ENCODE measurements at regions of chr19 and their contacts with region 1.

Region 1: DNA sequence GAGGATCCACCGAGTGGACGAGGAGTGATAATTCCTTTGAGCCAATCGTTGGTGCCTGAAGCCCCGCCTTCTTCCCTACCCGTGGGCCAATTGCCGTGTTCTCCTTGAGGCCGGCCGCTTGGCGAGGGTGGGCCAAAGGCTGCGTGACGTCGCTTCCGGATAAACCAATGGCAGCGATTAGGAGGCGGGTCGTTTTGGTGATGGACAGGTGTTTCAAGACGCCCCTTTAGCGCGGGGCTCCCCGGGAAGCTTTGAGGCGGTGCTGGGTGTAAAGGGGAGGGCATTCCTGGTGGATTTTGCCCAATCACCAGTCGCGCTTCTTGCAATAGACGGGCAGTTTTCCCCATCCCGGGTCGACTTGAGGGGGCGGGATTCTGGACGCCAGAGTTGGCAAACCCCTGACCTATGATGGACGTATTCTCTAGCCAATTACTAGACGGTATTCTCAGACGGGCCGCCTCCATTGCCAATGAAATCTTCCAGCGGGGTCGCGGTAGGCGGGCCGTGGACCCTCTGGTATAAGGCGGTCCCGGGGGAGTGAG is 310 bp upstream of the PRMT1 start:
- DNase-seq: peak; percentile 97 to 99 (median 98)
- H3K4me3 ChIP-seq: peak overlapping the region; percentile 69 to 79
- H3K4me3 Mint-ChIP-seq: peak overlapping the region; percentile 95 to 100 (median 99)
- H3K27ac ChIP-seq: peak overlapping the region; percentile 93
- H3K27ac Mint-ChIP-seq: peak overlapping the region; percentile 99 to 100 (median 99)
- H3K4me1 ChIP-seq: peaks cover 48% of the 10 kb centered on the region
- H3K4me1 Mint-ChIP-seq: peaks cover 19 to 54% (median 37%) of the 10 kb centered on the region in 4 donors
- H3K27me3 ChIP-seq: no peaks in the 10 kb centered on the region
- H3K27me3 Mint-ChIP-seq: no peaks in the 10 kb centered on the region

Region 2: GRCh38 chr19:49224856-49225255 is 451.9 kb before region 1 on chr19:
- CTCF ChIA-PET with region 1: interaction called, 8 read pairs
- POLR2A ChIA-PET with region 1: no interaction called
- intact Hi-C with region 1: loop called (anchors 1 kb)
- DNase-seq: no peak
- H3K4me3 ChIP-seq: no peak overlapping the region
- H3K4me3 Mint-ChIP-seq: no peak overlapping the region
- H3K27ac ChIP-seq: no peak overlapping the region
- H3K27ac Mint-ChIP-seq: peak overlapping the region in 1 of 7 donors; percentile 73
- H3K4me1 ChIP-seq: peaks cover 8% of the 10 kb centered on the region
- H3K4me1 Mint-ChIP-seq: peaks cover 4 to 9% (median 5%) of the 10 kb centered on the region in 4 donors
- H3K27me3 ChIP-seq: no peaks in the 10 kb centered on the region
- H3K27me3 Mint-ChIP-seq: peaks cover 6% of the 10 kb centered on the region in 2 donors

Region 3: GRCh38 chr19:49468746-49469447 is 207.9 kb before region 1 on chr19:
- CTCF ChIA-PET with region 1: interaction called, 8 read pairs
- POLR2A ChIA-PET with region 1: interaction called, 17 read pairs
- intact Hi-C with region 1: loop called (anchors 1 kb)
- DNase-seq: peak; percentile 96 to 99 (median 98)
- H3K4me3 ChIP-seq: peak overlapping the region in 1 of 2 donors; percentile 44
- H3K4me3 Mint-ChIP-seq: peak overlapping the region; percentile 67 to 94 (median 80)
- H3K27ac ChIP-seq: peak overlapping the region; percentile 84
- H3K27ac Mint-ChIP-seq: peak overlapping the region; percentile 94 to 100 (median 100)
- H3K4me1 ChIP-seq: peaks cover 71% of the 10 kb centered on the region
- H3K4me1 Mint-ChIP-seq: peaks cover 24 to 61% (median 40%) of the 10 kb centered on the region in 4 donors
- H3K27me3 ChIP-seq: no peaks in the 10 kb centered on the region
- H3K27me3 Mint-ChIP-seq: no peaks in the 10 kb centered on the region

Region 4: DNA sequence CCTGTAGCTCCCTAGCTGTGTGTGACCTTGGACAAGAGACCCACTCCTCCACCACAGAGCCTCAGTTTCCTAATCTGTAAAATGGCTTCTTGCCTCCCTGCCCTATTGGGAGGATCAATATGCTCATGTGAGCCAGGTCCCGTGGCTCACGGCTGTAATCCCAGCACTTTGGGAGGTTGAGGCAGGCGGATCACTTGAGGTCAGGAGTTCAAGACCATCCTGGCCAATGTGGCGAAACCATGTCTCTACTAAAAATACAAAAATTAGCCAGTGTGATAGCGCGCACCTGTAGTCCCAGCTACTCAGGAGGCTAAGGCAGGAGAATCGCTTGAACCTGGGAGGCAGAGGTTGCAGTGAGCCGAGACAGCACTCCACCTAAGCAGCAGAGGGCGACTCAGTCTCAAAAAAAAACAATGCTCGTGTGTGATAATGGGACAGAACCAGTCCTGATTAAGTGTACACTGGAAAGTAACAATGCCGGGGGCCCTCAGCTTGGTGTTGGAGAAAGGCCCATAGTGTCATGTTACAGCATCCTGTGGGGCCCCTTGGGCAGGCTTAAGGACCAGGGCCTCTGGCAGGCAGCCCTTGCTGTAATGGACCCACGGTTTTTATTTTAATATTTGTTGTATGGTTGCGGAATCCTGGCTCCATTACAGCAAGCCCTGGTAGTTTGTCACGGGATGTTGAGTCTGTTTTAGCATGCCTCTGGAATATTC is 173.7 kb before region 1 on chr19:
- CTCF ChIA-PET with region 1: interaction called, 6 read pairs
- POLR2A ChIA-PET with region 1: interaction called, 10 read pairs
- intact Hi-C with region 1: loop called (anchors 1 kb)
- DNase-seq: peak; percentile 65 to 79 (median 74)
- H3K4me3 ChIP-seq: no peak overlapping the region
- H3K4me3 Mint-ChIP-seq: peak overlapping the region; percentile 6 to 100 (median 36)
- H3K27ac ChIP-seq: peak overlapping the region; percentile 95
- H3K27ac Mint-ChIP-seq: peak overlapping the region; percentile 91 to 100 (median 99)
- H3K4me1 ChIP-seq: peaks cover 52% of the 10 kb centered on the region
- H3K4me1 Mint-ChIP-seq: peaks cover 16 to 61% (median 33%) of the 10 kb centered on the region in 4 donors
- H3K27me3 ChIP-seq: no peaks in the 10 kb centered on the region
- H3K27me3 Mint-ChIP-seq: no peaks in the 10 kb centered on the region

Region 5: GRCh38 chr19:49580264-49581006 is 96.3 kb before region 1 on chr19 and contains the start of gene NOSIP:
- CTCF ChIA-PET with region 1: interaction called, 8 read pairs
- POLR2A ChIA-PET with region 1: interaction called, 29 read pairs
- intact Hi-C with region 1: loop called (anchors 1 kb)
- DNase-seq: peak; percentile 94 to 97 (median 95)
- H3K4me3 ChIP-seq: peak within 1 kb of the TSS; percentile 54 to 99
- H3K4me3 Mint-ChIP-seq: peak within 1 kb of the TSS; percentile 90 to 97 (median 94)
- H3K27ac ChIP-seq: peak within 1 kb of the TSS; percentile 80
- H3K27ac Mint-ChIP-seq: peak within 1 kb of the TSS; percentile 85 to 96 (median 94)
- H3K4me1 ChIP-seq: peaks cover 31% of the 10 kb centered on the region
- H3K4me1 Mint-ChIP-seq: peaks cover 21 to 40% (median 28%) of the 10 kb centered on the region in 4 donors
- H3K27me3 ChIP-seq: no peaks in the 10 kb centered on the region
- H3K27me3 Mint-ChIP-seq: no peaks in the 10 kb centered on the region
- total RNA-seq, gene NOSIP: 177 to 191 TPM

Region 6: DNA sequence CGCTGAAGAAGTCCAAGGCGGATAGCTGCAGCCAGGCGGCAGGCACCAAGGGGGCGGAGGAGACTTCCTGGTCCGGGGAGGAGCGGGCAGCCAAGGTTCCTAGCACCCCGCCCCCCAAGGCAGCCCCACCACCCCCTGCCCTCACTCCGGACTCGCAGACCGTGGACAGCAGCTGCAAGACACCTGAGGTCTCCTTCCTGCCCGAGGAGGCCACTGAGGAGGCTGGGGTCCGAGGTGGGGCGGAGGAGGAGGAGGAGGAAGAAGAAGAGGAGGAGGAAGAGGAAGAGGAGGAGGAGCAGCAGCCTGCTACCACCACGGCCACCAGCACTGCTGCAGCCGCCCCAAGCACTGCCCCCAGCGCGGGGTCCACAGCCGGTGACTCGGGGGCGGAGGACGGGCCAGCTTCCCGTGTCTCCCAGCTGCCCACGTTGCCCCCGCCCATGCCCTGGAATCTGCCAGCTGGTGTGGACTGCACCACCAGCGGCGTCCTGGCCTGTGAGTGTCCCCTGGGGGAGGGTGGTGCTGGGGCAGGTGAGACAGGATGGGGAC is 23.5 kb before region 1 on chr19:
- CTCF ChIA-PET with region 1: interaction called, 7 read pairs
- POLR2A ChIA-PET with region 1: interaction called, 125 read pairs
- intact Hi-C with region 1: loop called (anchors 1 kb)
- DNase-seq: peak in 1 of 5 donors; percentile 39
- H3K4me3 ChIP-seq: no peak overlapping the region
- H3K4me3 Mint-ChIP-seq: no peak overlapping the region
- H3K27ac ChIP-seq: no peak overlapping the region
- H3K27ac Mint-ChIP-seq: peak overlapping the region in 1 of 7 donors; percentile 51
- H3K4me1 ChIP-seq: no peaks in the 10 kb centered on the region
- H3K4me1 Mint-ChIP-seq: peaks cover 0 to 9% (median under 1%) of the 10 kb centered on the region in 4 donors
- H3K27me3 ChIP-seq: no peaks in the 10 kb centered on the region
- H3K27me3 Mint-ChIP-seq: no peaks in the 10 kb centered on the region

Region 7: GRCh38 chr19:49877020-49877878 is 200.5 kb after region 1 on chr19 and contains the starts of genes AKT1S1 and TBC1D17:
- CTCF ChIA-PET with region 1: no interaction called
- POLR2A ChIA-PET with region 1: interaction called, 9 read pairs
- intact Hi-C with region 1: loop called (anchors 5 kb)
- DNase-seq: peak; percentile 99 to 100 (median 100)
- H3K4me3 ChIP-seq: peak within 1 kb of the TSS; percentile 97 to 98
- H3K4me3 Mint-ChIP-seq: no peak within 1 kb of the TSS
- H3K27ac ChIP-seq: peak within 1 kb of the TSS; percentile 95
- H3K27ac Mint-ChIP-seq: no peak within 1 kb of the TSS
- H3K4me1 ChIP-seq: peaks cover 29% of the 10 kb centered on the region
- H3K4me1 Mint-ChIP-seq: peaks cover 14 to 44% (median 18%) of the 10 kb centered on the region in 4 donors
- H3K27me3 ChIP-seq: no peaks in the 10 kb centered on the region
- H3K27me3 Mint-ChIP-seq: no peaks in the 10 kb centered on the region
- total RNA-seq, gene AKT1S1: 19.7 to 20.2 TPM
- total RNA-seq, gene TBC1D17: 101 TPM

Measured in CD4-positive, alpha-beta memory T cell (primary cell).